ENCODE measurements at regions of chr9 and their contacts with region 1.

Region 1: GRCh38 chr9:125241000-125241862 is at the start of gene HSPA5:
- DNase-seq: peak; percentile 100
- ATAC-seq: peak; percentile 92
- H3K4me3 Mint-ChIP-seq: peak within 1 kb of the TSS; percentile 96
- H3K27ac Mint-ChIP-seq: peak within 1 kb of the TSS; percentile 98
- H3K4me1 Mint-ChIP-seq: peaks cover 39% of the 10 kb centered on the region
- H3K27me3 Mint-ChIP-seq: no peaks in the 10 kb centered on the region
- total RNA-seq, gene HSPA5: 146 to 148 TPM

Region 2: DNA sequence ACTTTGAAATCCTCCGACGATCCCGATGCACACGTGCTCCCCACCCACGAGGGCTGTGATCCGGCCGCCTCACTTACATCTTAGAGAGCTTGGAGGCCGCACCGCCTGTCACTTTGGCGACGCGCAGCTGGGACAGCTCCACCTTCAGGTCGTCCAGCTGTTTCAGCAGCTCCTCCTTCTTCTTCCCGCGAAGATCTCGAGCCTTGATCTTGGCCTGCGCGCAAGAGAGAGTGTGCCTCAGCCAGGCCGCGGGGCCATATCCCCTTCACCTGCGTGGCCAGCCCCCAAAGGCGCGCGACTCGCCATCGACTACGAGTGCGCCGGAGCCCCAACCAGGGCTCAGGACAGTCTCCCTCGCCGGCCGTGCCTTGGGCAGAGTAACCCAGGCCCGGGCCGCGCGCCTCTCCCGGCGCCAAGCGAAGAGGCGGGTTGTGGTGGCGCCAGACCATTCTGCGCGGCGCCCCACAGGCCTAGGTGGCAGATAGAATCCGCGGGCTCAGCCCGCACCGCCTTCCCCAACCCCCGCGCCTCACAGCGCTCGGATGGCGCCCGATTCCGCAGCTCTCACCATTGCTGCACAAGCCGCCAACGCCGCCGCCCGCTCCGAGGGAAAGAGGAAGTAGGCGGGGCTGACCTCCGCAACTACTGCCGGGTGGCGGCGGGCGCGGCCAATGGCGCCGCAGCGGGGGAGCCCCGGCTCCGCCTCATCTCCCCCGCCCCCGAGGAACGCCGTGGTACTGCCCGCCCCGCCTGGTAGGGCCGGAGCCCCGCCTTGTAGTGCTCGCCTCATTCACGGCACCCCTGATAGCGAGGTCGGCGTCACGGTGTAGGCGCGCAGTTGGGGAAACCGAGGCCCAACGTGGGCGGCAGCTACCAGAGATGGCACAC is 379.6 kb before region 1 on chr9 and contains the starts of genes ARPC5L and RPL35:
- CTCF ChIA-PET with region 1: no interaction called
- POLR2A ChIA-PET with region 1: interaction called, 12 read pairs
- DNase-seq: peak; percentile 96
- ATAC-seq: peak; percentile 95
- H3K4me3 Mint-ChIP-seq: peak within 1 kb of the TSS; percentile 97
- H3K27ac Mint-ChIP-seq: peak within 1 kb of the TSS; percentile 98
- H3K4me1 Mint-ChIP-seq: peaks cover 34% of the 10 kb centered on the region
- H3K27me3 Mint-ChIP-seq: no peaks in the 10 kb centered on the region
- total RNA-seq, gene ARPC5L: 82.0 to 86.0 TPM
- total RNA-seq, gene RPL35: 1,341 to 1,437 TPM

Region 3: DNA sequence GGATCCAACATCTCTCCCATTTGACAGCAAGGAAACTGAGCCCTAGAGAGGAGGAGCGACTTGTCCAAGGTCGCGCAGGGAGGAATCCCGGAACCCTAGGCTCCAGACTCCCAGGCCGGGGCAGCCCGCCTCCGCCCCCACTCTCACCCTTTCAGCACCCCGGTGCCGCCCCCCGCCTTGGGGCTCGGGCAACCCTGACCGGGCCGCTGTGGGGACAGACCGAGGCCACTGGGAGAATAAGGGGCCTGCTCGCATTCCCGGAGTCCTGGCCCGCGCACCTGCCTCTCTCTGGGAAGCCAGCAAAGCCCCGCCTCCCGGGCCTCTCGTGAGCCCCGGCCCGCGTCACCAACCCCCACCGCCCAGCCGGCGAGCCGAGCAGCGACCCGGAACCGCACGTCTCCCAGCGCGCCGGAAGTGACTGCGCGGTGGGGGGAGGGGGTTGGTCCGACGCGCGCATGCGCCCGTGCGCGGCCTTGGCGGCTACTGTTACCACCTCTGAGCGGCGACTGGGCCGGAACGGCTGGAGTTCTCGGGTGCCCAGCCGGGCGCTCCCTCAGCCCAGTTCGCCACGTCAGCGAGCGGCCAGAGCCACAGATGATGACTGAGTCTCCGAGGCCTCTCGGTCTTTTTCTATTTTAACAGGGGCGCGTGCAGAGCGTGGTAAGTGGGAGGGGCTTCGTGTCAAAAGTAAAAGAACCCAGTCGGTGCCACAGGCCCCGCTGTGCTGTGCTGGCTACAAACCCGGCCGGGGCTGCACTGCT is 300.4 kb before region 1 on chr9 and contains the start of gene GOLGA1:
- CTCF ChIA-PET with region 1: no interaction called
- POLR2A ChIA-PET with region 1: interaction called, 13 read pairs
- DNase-seq: peak; percentile 94
- ATAC-seq: peak; percentile 90
- H3K4me3 Mint-ChIP-seq: peak within 1 kb of the TSS; percentile 90
- H3K27ac Mint-ChIP-seq: peak within 1 kb of the TSS; percentile 94
- H3K4me1 Mint-ChIP-seq: peaks cover 21% of the 10 kb centered on the region
- H3K27me3 Mint-ChIP-seq: no peaks in the 10 kb centered on the region
- total RNA-seq, gene GOLGA1: 14.0 to 16.2 TPM

Region 4: GRCh38 chr9:124980429-124980828 is 260.8 kb before region 1 on chr9:
- CTCF ChIA-PET with region 1: no interaction called
- POLR2A ChIA-PET with region 1: no interaction called
- DNase-seq: no peak
- ATAC-seq: no peak
- H3K4me3 Mint-ChIP-seq: no peak overlapping the region
- H3K27ac Mint-ChIP-seq: no peak overlapping the region
- H3K4me1 Mint-ChIP-seq: peaks cover 2% of the 10 kb centered on the region
- H3K27me3 Mint-ChIP-seq: no peaks in the 10 kb centered on the region

Region 5: GRCh38 chr9:125200210-125201047 is 40.8 kb before region 1 on chr9 and contains the start of gene RABEPK:
- CTCF ChIA-PET with region 1: interaction called, 4 read pairs
- POLR2A ChIA-PET with region 1: interaction called, 40 read pairs
- DNase-seq: peak; percentile 91
- ATAC-seq: peak; percentile 98
- H3K4me3 Mint-ChIP-seq: peak within 1 kb of the TSS; percentile 96
- H3K27ac Mint-ChIP-seq: peak within 1 kb of the TSS; percentile 94
- H3K4me1 Mint-ChIP-seq: peaks cover 22% of the 10 kb centered on the region
- H3K27me3 Mint-ChIP-seq: no peaks in the 10 kb centered on the region
- total RNA-seq, gene RABEPK: 15.0 to 15.3 TPM

Region 6: GRCh38 chr9:125255781-125256391 is 14.7 kb after region 1 on chr9:
- CTCF ChIA-PET with region 1: interaction called, 13 read pairs
- POLR2A ChIA-PET with region 1: interaction called, 89 read pairs
- DNase-seq: peak; percentile 34
- ATAC-seq: peak; percentile 53
- H3K4me3 Mint-ChIP-seq: no peak overlapping the region
- H3K27ac Mint-ChIP-seq: no peak overlapping the region
- H3K4me1 Mint-ChIP-seq: peaks cover 6% of the 10 kb centered on the region
- H3K27me3 Mint-ChIP-seq: peaks cover 4% of the 10 kb centered on the region

Region 7: GRCh38 chr9:125361837-125362531 is 120.8 kb after region 1 on chr9:
- CTCF ChIA-PET with region 1: interaction called, 10 read pairs
- POLR2A ChIA-PET with region 1: interaction called, 17 read pairs
- DNase-seq: peak; percentile 45
- ATAC-seq: peak; percentile 39
- H3K4me3 Mint-ChIP-seq: no peak overlapping the region
- H3K27ac Mint-ChIP-seq: no peak overlapping the region
- H3K4me1 Mint-ChIP-seq: peaks cover 13% of the 10 kb centered on the region
- H3K27me3 Mint-ChIP-seq: no peaks in the 10 kb centered on the region